ENCODE measurements at regions of chr18 and their contacts with region 1.

Region 1: DNA sequence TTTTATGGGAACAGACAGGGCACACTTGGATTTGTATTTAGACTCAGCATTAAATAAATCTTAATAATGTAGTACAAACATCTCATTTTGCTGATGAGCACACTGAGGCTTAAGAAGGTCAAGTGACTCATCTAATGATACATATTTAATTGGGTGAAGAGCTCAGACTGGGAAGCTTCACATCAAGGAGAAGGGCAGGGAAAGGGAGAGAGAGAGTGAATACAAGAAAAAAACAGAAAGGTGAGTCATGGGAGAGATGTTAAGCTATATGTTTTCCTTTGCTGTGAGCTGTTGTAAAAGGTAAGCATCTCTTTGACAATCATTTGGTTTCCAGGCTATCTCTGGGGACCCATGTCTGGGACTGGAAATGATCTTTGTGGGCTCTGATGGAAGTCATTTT is 277.8 kb downstream of the SETBP1 start:
- DNase-seq: no peak
- H3K4me3 ChIP-seq: no peak overlapping the region
- H3K27ac ChIP-seq: no peak overlapping the region
- H3K4me1 ChIP-seq: peaks cover 0 to 6% of the 10 kb centered on the region in 2 donors
- H3K27me3 ChIP-seq: no peaks in the 10 kb centered on the region
- CTCF ChIP-seq: no peak

Region 2: GRCh38 chr18:44917216-44918141 is 41.0 kb before region 1 on chr18:
- intact Hi-C with region 1: loop called (anchors 5 kb)
- DNase-seq: no peak
- H3K4me3 ChIP-seq: no peak overlapping the region
- H3K27ac ChIP-seq: peak overlapping the region; percentile 81 to 89
- H3K4me1 ChIP-seq: peaks cover 13 to 26% of the 10 kb centered on the region in 2 donors
- H3K27me3 ChIP-seq: no peaks in the 10 kb centered on the region
- CTCF ChIP-seq: no peak

Measured in ascending aorta (tissue), 2 donors.